ENCODE measurements at regions of chr9 and their contacts with region 1.

Region 1: DNA sequence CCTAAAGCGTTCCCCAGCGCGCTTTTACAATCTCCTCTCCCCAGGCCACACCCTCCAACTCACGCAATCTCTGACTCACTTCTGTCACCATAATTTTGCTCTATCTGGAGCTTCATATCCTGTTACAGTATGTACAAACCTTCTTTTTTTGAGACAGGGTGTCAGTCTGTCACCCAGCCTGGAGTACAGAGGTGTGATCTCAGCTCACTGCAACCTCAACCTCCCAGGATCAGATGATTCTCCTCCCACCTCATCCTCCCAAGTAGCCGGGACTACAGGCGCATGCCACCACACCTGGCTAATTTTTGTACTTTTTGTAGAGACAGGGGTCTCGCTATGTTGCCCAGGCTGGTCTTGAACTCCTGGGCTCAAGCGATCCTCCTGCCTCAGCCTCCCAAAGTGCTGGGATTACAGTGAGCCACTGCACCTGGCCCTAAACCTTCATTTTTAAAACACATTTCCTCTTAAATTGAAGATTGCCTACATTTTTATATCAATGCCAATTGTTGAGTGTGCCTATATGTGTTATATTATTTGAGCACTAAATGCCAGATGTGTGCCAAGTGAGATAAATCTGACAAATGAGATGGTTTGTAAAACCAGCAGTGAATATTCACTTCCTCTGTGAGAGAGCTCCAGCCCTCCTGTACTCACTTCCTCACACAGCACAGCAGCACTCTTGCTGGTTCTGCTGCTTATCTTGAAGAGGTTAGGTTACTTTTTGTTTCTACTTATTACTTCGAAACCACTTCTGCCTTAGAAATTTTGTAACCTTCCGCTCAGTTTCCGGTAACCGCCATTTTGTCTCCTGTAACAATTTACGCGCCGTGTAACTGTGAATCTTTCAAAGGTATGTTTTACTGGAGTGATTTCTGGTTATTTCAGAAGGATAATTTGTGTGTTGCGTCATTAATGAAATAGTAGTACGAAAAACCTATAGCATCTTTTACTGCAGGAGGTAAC is 57.9 kb downstream of the DOCK8 start:
- DNase-seq: peak; percentile 84
- ATAC-seq: peak; percentile 88
- H3K4me3 Mint-ChIP-seq: peak overlapping the region; percentile 97
- H3K27ac Mint-ChIP-seq: peak overlapping the region; percentile 98
- H3K4me1 Mint-ChIP-seq: peaks cover 43% of the 10 kb centered on the region
- H3K27me3 Mint-ChIP-seq: no peaks in the 10 kb centered on the region

Region 2: GRCh38 chr9:214648-215493 is 57.7 kb before region 1 on chr9 and contains the start of gene DOCK8:
- CTCF ChIA-PET with region 1: interaction called, 5 read pairs
- POLR2A ChIA-PET with region 1: no interaction called
- intact Hi-C with region 1: loop called (anchors 1 to 5 kb)
- DNase-seq: peak; percentile 75
- ATAC-seq: peak; percentile 84
- H3K4me3 Mint-ChIP-seq: peak within 1 kb of the TSS; percentile 72
- H3K27ac Mint-ChIP-seq: peak within 1 kb of the TSS; percentile 21
- H3K4me1 Mint-ChIP-seq: peaks cover 4% of the 10 kb centered on the region
- H3K27me3 Mint-ChIP-seq: peaks cover 13% of the 10 kb centered on the region
- total RNA-seq, gene DOCK8: 100 to 125 TPM

Region 3: DNA sequence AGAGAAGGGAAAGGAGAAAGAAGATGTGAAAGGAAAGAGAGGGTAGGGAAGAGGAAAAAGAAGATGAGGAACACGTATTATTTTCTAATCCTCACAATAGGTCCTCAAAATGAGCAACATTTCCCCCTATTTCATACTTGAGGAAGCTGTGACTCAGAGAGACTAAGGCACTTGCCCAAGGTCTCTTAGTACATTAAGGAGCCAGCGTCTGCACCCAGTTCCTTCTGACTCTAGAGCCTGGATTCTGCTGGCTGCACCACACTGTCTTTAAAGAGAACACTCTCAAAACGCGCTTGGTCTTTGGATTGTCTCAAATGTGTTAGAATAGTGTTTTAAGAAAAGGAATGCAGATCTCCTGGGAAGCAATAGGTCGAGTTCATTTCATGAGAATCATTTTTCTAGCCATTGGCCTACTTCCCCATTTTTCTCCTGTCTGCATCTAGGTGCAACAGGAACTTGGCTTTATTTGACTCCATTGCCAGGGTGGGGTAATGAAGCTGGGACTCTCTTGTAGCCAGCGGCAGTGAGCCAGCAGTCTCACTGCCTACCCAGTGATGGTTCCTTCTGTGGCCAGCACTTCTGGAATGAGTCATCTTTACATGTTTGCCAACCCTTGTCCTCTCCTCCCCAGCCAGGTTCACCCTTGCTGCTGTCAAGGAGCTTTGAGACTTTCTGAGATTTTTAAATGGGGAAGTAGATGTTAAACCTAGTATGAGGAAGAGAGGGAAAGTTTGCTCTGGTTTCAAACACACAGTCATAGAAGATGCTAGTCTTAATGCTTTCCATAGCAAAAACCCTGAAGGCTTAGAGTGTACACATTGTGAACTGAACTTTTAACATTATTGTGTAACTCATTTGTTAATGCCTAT is 24.8 kb after region 1 on chr9:
- CTCF ChIA-PET with region 1: interaction called, 4 read pairs
- POLR2A ChIA-PET with region 1: interaction called, 11 read pairs
- intact Hi-C with region 1: no loop called
- DNase-seq: peak; percentile 43
- ATAC-seq: peak; percentile 89
- H3K4me3 Mint-ChIP-seq: no peak overlapping the region
- H3K27ac Mint-ChIP-seq: peak overlapping the region; percentile 82
- H3K4me1 Mint-ChIP-seq: peaks cover 40% of the 10 kb centered on the region
- H3K27me3 Mint-ChIP-seq: no peaks in the 10 kb centered on the region

Region 4: DNA sequence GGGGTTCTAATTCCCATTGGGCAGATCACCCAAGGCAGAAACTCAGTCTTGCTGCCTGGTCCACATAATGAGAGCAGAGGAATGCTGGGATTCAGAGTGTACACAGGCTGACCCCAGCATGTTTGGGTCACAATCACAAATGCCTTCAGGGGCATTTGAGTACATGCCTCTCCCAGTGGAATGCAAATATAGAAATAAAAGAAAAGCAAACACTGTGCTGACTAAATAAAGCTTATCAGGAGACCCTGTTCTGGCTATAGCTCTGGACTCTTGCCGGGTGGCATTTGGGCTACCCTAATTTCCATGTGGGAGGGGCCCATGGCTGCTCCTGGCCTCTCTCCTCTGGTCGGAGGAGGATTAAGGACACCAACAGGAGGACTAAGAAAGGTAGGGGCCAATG is 63.5 kb after region 1 on chr9:
- CTCF ChIA-PET with region 1: no interaction called
- POLR2A ChIA-PET with region 1: no interaction called
- intact Hi-C with region 1: no loop called
- DNase-seq: no peak
- ATAC-seq: no peak
- H3K4me3 Mint-ChIP-seq: no peak overlapping the region
- H3K27ac Mint-ChIP-seq: no peak overlapping the region
- H3K4me1 Mint-ChIP-seq: peaks cover 7% of the 10 kb centered on the region
- H3K27me3 Mint-ChIP-seq: no peaks in the 10 kb centered on the region

Region 5: DNA sequence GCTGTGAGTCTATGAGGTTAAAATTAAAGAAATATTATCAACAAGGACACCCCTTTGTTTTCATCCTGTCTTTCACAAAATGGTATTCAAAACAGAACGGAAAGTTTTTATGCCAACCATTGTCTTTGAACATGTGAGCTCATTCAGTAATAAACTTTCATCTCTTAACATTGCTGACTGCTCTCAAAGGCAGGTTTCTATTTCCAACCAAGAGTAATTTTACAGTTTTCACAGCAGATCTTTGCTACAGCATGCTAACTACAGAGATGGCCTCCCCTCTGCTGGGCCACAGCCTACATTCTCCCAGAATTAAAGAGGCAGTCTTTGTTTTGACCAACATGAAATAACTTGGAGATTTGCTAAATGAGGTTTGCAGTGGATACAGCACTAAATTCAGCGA is 879.2 kb after region 1 on chr9:
- CTCF ChIA-PET with region 1: no interaction called
- POLR2A ChIA-PET with region 1: no interaction called
- intact Hi-C with region 1: no loop called
- DNase-seq: no peak
- ATAC-seq: no peak
- H3K4me3 Mint-ChIP-seq: no peak overlapping the region
- H3K27ac Mint-ChIP-seq: no peak overlapping the region
- H3K4me1 Mint-ChIP-seq: no peaks in the 10 kb centered on the region
- H3K27me3 Mint-ChIP-seq: no peaks in the 10 kb centered on the region

Region 6: DNA sequence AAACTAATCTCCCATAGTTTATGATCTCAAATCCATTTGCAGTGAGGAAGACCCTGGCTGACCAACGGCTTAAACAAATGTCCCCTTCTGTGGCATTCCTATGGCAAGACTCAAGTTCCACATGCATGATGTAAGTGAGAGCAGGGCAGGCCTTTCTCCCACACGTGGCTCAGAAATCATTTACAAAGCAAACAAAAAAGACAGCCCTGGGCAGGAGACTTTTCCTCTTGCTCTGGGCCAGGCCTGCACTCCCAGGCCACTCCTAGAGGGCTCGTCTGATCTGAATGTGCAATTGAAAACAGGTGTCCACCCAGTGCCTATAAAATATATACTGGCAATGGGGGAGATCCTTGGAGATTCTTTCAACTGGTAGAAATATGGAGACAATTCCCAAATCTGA is 900.7 kb after region 1 on chr9:
- CTCF ChIA-PET with region 1: no interaction called
- POLR2A ChIA-PET with region 1: no interaction called
- intact Hi-C with region 1: no loop called
- DNase-seq: no peak
- ATAC-seq: no peak
- H3K4me3 Mint-ChIP-seq: no peak overlapping the region
- H3K27ac Mint-ChIP-seq: no peak overlapping the region
- H3K4me1 Mint-ChIP-seq: no peaks in the 10 kb centered on the region
- H3K27me3 Mint-ChIP-seq: peaks cover 9% of the 10 kb centered on the region

Region 7: GRCh38 chr9:2014696-2015580 is 1742.4 kb after region 1 on chr9 and contains the start of gene SMARCA2:
- CTCF ChIA-PET with region 1: no interaction called
- POLR2A ChIA-PET with region 1: no interaction called
- intact Hi-C with region 1: loop called (anchors 5 to 10 kb)
- DNase-seq: peak; percentile 98
- ATAC-seq: peak; percentile 84
- H3K4me3 Mint-ChIP-seq: peak within 1 kb of the TSS; percentile 92
- H3K27ac Mint-ChIP-seq: peak within 1 kb of the TSS; percentile 99
- H3K4me1 Mint-ChIP-seq: peaks cover 45% of the 10 kb centered on the region
- H3K27me3 Mint-ChIP-seq: no peaks in the 10 kb centered on the region
- total RNA-seq, gene SMARCA2: 91.3 to 94.0 TPM